Thyroid gland (tissue), 4 donors: ENCODE measurements at regions of chr12 and their contacts with region 1.

Region 1: DNA sequence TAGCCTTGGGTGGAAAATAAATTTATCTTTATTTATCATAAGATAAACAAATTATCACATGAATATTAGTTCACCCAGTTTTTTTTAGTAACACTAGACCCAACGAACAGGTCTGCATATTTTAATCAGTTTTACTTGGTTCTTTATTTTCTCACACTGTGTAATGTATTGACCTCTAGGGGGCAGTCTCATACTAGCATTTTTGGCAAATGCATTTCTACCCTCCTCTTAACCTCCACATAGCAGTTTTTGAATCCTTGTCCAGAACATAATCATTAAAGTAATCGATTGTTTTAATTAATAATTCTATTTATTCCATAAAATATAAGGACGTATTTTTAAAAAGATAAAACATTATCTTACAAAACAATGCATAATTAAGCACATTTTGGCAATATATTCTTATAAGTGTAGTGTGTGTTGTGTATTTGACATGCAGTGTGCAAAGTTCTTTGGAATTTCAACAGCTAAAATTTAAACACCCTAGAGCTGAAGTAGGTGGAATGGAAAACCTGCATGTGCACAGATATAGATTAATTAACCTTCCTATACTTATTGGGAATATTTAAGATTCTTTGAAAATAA is 31.6 kb upstream of the PTPRQ start:
- DNase-seq: no peak
- H3K4me3 ChIP-seq: no peak overlapping the region
- H3K27ac ChIP-seq: no peak overlapping the region
- H3K4me1 ChIP-seq: no peaks in the 10 kb centered on the region
- H3K27me3 ChIP-seq: no peaks in the 10 kb centered on the region
- CTCF ChIP-seq: peak; percentile 25 to 77 (median 74)
- POLR2A ChIP-seq: no peak

Region 2: GRCh38 chr12:80313209-80313608 is 99.3 kb before region 1 on chr12:
- intact Hi-C with region 1: no loop called
- DNase-seq: no peak
- H3K4me3 ChIP-seq: no peak overlapping the region
- H3K27ac ChIP-seq: no peak overlapping the region
- H3K4me1 ChIP-seq: no peaks in the 10 kb centered on the region
- H3K27me3 ChIP-seq: no peaks in the 10 kb centered on the region
- CTCF ChIP-seq: no peak
- POLR2A ChIP-seq: no peak

Region 3: GRCh38 chr12:80763874-80764273 is 351.4 kb after region 1 on chr12:
- intact Hi-C with region 1: loop called (anchors 5 kb)
- DNase-seq: peak; percentile 17 to 18
- H3K4me3 ChIP-seq: no peak overlapping the region
- H3K27ac ChIP-seq: no peak overlapping the region
- H3K4me1 ChIP-seq: no peaks in the 10 kb centered on the region
- H3K27me3 ChIP-seq: no peaks in the 10 kb centered on the region
- CTCF ChIP-seq: peak in 5 of 6 experiments; percentile 33 to 70 (median 57)
- POLR2A ChIP-seq: no peak